ENCODE measurements at regions of chr17 and their contacts with region 1.

Region 1: GRCh38 chr17:16353317-16354174 is at the start of gene CENPV:
- DNase-seq: peak; percentile 62 to 76 (median 71)
- ATAC-seq: peak; percentile 96
- H3K4me3 ChIP-seq: peak within 1 kb of the TSS; percentile 78
- H3K4me3 Mint-ChIP-seq: peak within 1 kb of the TSS; percentile 89 to 98 (median 95)
- H3K27ac ChIP-seq: peak within 1 kb of the TSS; percentile 73
- H3K27ac Mint-ChIP-seq: peak within 1 kb of the TSS; percentile 73 to 98 (median 86)
- H3K4me1 ChIP-seq: peaks cover 4 to 5% of the 10 kb centered on the region in 2 donors
- H3K4me1 Mint-ChIP-seq: peaks cover 11 to 23% (median 19%) of the 10 kb centered on the region in 7 donors
- H3K27me3 ChIP-seq: no peaks in the 10 kb centered on the region
- H3K27me3 Mint-ChIP-seq: peaks cover 0 to 27% (median 0%) of the 10 kb centered on the region in 5 donors
- total RNA-seq, gene CENPV: 9.8 to 30.3 (median 21.7) TPM

Region 2: DNA sequence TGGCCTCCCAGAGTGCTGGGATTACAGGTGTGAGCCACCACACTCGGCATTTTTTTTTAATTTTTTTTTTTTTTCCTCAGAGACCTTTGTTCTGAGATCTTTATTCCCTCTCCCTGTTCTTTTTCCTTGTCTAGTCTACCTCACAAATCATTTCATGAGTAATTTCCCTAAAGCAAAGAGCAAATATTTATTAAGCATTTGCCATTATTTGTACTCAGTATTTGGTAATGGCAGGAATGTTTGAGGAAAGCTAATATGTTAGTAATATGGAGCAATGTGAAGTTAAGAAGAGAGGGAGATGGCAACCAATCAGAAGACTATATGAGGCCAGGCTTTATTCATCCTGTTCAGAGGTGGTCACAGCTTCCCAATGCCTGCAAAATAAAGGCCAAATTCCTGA is 13.6 kb before region 1 on chr17:
- CTCF ChIA-PET with region 1: interaction called, 4 read pairs
- POLR2A ChIA-PET with region 1: interaction called, 10 read pairs
- intact Hi-C with region 1: no loop called
- DNase-seq: no peak
- ATAC-seq: no peak
- H3K4me3 ChIP-seq: no peak overlapping the region
- H3K4me3 Mint-ChIP-seq: no peak overlapping the region
- H3K27ac ChIP-seq: no peak overlapping the region
- H3K27ac Mint-ChIP-seq: no peak overlapping the region
- H3K4me1 ChIP-seq: no peaks in the 10 kb centered on the region
- H3K4me1 Mint-ChIP-seq: no peaks in the 10 kb centered on the region
- H3K27me3 ChIP-seq: no peaks in the 10 kb centered on the region
- H3K27me3 Mint-ChIP-seq: no peaks in the 10 kb centered on the region